ENCODE measurements at regions of chr6 and their contacts with region 1.

Region 1: GRCh38 chr6:124961777-124962611 is at the start of gene RNF217:
- DNase-seq: peak; percentile 48 to 68
- ATAC-seq: peak; percentile 75 to 81
- H3K4me3 ChIP-seq: peak within 1 kb of the TSS; percentile 82
- H3K27ac ChIP-seq: peak within 1 kb of the TSS; percentile 97 to 99
- H3K4me1 ChIP-seq: peaks cover 36% of the 10 kb centered on the region
- CTCF ChIP-seq: no peak
- EP300 ChIP-seq: no peak
- POLR2A ChIP-seq: peak; percentile 59
- RAD21 ChIP-seq: no peak
- polyA plus RNA-seq, gene RNF217: 20.0 and 22.3 TPM in 2 replicates

Region 2: DNA sequence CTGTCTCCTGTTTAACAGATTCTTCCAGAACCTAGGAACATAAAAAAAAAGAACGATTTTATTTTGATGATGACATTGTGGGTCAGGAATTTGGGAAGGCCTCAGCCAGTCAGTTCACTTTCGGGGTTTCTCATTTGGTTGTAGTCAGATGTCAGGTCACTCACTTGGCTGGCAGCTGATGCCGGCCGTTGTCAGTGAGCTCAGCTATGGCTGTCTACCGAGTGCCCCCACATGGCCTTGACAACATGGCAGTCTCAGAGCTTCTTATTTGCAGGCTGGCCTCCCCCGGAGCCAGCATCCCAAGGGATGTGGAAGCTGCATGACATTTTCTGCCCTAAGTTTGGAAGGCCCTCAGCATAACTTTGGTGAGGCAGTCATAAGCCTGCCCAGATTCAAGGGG is 11.8 kb after region 1 on chr6:
- CTCF ChIA-PET with region 1: interaction called, 10 read pairs
- POLR2A ChIA-PET with region 1: no interaction called
- DNase-seq: no peak
- ATAC-seq: no peak
- H3K4me3 ChIP-seq: no peak overlapping the region
- H3K27ac ChIP-seq: no peak overlapping the region
- H3K4me1 ChIP-seq: peaks cover 17% of the 10 kb centered on the region
- CTCF ChIP-seq: no peak
- EP300 ChIP-seq: no peak
- POLR2A ChIP-seq: no peak
- RAD21 ChIP-seq: no peak